ENCODE measurements at regions of chr1 and their contacts with region 1.

Region 1: GRCh38 chr1:39973503-39974135 is 18.7 kb downstream of the MFSD2A start:
- DNase-seq: peak; percentile 53 to 90 (median 77)
- ATAC-seq: peak; percentile 80 to 94 (median 88)
- H3K4me3 ChIP-seq: no peak overlapping the region
- H3K27ac ChIP-seq: no peak overlapping the region
- H3K4me1 ChIP-seq: peaks cover 0 to 7% (median 0%) of the 10 kb centered on the region in 3 donors
- H3K27me3 ChIP-seq: no peaks in the 10 kb centered on the region
- CTCF ChIP-seq: peak; percentile 90 to 92 (median 91)

Region 2: DNA sequence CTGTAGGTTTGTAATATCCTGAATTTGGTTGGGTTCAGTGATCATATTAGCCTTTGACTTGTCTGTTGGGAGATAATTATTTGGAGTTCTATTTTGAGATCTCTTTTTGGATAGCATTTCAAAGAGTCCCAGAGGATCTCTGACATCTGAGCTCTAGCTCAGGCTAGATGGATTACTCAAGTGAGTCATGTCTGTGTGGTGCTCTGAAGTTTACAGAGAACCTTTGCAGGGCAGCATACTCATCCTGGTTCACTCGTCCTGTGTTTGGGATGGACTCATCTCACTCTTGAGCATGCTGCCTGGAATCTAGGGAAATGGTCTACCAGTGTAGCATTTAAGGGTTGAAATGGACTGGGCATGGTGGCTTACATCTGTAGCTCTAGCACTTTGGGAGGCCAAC is 511.5 kb before region 1 on chr1:
- intact Hi-C with region 1: no loop called
- DNase-seq: no peak
- ATAC-seq: no peak
- H3K4me3 ChIP-seq: no peak overlapping the region
- H3K27ac ChIP-seq: no peak overlapping the region
- H3K4me1 ChIP-seq: no peaks in the 10 kb centered on the region
- H3K27me3 ChIP-seq: no peaks in the 10 kb centered on the region
- CTCF ChIP-seq: no peak

Region 3: DNA sequence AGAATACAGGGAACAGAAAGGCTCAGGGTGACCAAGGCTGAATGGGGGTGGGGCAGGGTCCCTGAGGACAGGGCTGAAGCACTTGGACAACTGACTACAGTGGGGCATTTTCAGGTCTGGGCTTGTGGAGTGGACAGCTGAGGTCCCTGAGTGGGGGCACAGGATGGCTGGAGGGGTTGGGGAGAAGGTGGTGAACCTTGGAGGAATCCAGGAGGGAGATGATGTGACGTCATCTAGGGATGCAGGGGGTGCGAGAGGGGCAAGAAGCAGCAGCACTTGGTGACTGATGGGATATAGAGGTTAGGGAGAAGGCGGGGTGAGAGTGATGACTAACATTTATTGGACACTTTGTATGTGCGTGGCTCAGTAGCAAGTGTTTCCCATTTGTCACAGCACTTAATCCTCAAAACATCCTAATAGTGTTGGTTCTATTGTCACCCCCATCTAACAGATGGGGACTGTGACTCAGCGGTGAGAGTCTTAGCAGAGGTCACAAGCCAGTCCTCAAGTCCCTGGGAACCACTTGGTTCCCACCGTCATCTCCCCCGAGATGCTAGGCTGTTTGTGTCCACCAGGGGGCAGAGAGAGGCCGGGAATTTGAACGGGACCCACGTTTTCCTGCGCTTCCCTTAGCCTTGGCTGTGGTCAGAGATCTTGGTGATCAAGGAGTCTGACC is 157.1 kb before region 1 on chr1:
- intact Hi-C with region 1: loop called (anchors 2 to 10 kb)
- DNase-seq: peak in 5 of 6 donors; percentile 37 to 90 (median 75)
- ATAC-seq: peak; percentile 87 to 96 (median 92)
- H3K4me3 ChIP-seq: no peak overlapping the region
- H3K27ac ChIP-seq: no peak overlapping the region
- H3K4me1 ChIP-seq: no peaks in the 10 kb centered on the region
- H3K27me3 ChIP-seq: no peaks in the 10 kb centered on the region
- CTCF ChIP-seq: peak; percentile 68 to 82 (median 74)

Region 4: GRCh38 chr1:39829791-39830533 is 143.7 kb before region 1 on chr1:
- intact Hi-C with region 1: no loop called
- DNase-seq: no peak
- ATAC-seq: no peak
- H3K4me3 ChIP-seq: no peak overlapping the region
- H3K27ac ChIP-seq: no peak overlapping the region
- H3K4me1 ChIP-seq: peaks cover 0 to 4% (median under 1%) of the 10 kb centered on the region in 3 donors
- H3K27me3 ChIP-seq: no peaks in the 10 kb centered on the region
- CTCF ChIP-seq: no peak

Region 5: DNA sequence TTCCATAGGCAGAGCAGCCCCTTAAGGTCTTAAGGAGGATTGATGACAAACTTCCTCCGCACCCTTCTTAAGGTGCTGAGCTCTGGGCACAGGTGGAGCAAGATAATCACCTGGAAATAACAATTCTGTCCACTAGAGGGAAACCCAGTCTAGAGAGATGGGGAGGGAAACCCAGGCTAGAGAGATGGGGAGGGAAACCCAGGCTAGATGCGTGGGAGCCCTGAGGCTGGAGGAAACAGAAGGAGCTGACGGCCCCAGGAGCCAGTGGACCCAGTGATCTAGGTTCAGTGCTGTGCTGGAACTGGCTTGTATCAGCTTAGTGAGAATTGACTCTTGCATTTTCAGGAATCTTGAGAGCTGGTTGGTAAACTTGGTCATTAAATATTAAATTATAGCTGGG is 54.1 kb before region 1 on chr1:
- intact Hi-C with region 1: loop called (anchors 2 to 10 kb)
- DNase-seq: peak in 2 of 6 donors; percentile 35 to 55
- ATAC-seq: peak; percentile 95 to 100 (median 99)
- H3K4me3 ChIP-seq: no peak overlapping the region
- H3K27ac ChIP-seq: no peak overlapping the region
- H3K4me1 ChIP-seq: no peaks in the 10 kb centered on the region
- H3K27me3 ChIP-seq: no peaks in the 10 kb centered on the region
- CTCF ChIP-seq: peak; percentile 30 to 59 (median 49)

Region 6: GRCh38 chr1:39926343-39926793 is 47.3 kb before region 1 on chr1:
- intact Hi-C with region 1: loop called in 1 of 3 experiments (anchors 5 kb)
- DNase-seq: no peak
- ATAC-seq: peak in 3 of 4 donors; percentile 25 to 70 (median 31)
- H3K4me3 ChIP-seq: no peak overlapping the region
- H3K27ac ChIP-seq: no peak overlapping the region
- H3K4me1 ChIP-seq: no peaks in the 10 kb centered on the region
- H3K27me3 ChIP-seq: no peaks in the 10 kb centered on the region
- CTCF ChIP-seq: no peak

Region 7: DNA sequence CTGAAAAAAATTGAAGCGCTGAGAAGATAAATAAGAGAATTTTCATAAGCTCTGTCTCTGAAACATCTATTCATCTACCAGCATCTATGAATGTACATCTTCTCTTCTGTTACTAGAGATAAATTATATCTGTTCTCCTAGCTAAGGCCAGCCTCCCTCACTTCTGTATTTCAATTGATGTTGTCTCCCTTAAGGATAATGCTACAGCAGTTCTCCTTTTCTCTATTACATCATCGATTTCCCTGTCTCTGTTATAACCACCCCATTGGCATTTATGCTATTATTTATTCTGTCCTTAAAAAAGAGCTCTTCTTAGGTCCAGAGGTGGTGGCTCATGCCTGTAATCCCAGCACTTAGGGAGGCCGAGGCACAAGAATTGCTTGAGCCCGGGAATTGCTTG is 231.2 kb after region 1 on chr1:
- intact Hi-C with region 1: no loop called
- DNase-seq: no peak
- ATAC-seq: no peak
- H3K4me3 ChIP-seq: no peak overlapping the region
- H3K27ac ChIP-seq: no peak overlapping the region
- H3K4me1 ChIP-seq: no peaks in the 10 kb centered on the region
- H3K27me3 ChIP-seq: no peaks in the 10 kb centered on the region
- CTCF ChIP-seq: no peak